CD14-positive monocyte (primary cell): ENCODE measurements at regions of chr12 and their contacts with region 1.

Region 1: GRCh38 chr12:31682136-31682962 is 22.9 kb downstream of the ETFBKMT start:
- DNase-seq: peak; percentile 76 to 88 (median 84)
- H3K4me3 ChIP-seq: no peak overlapping the region
- H3K4me3 Mint-ChIP-seq: no peak overlapping the region
- H3K27ac ChIP-seq: no peak overlapping the region
- H3K27ac Mint-ChIP-seq: peak overlapping the region in 6 of 7 donors; percentile 17 to 91 (median 80)
- H3K4me1 ChIP-seq: peaks cover 18 to 21% of the 10 kb centered on the region in 2 donors
- H3K4me1 Mint-ChIP-seq: peaks cover 18% of the 10 kb centered on the region
- H3K27me3 ChIP-seq: no peaks in the 10 kb centered on the region
- H3K27me3 Mint-ChIP-seq: peaks cover 0 to 1% (median 0%) of the 10 kb centered on the region in 3 donors
- CTCF ChIP-seq: peak; percentile 81

Region 2: DNA sequence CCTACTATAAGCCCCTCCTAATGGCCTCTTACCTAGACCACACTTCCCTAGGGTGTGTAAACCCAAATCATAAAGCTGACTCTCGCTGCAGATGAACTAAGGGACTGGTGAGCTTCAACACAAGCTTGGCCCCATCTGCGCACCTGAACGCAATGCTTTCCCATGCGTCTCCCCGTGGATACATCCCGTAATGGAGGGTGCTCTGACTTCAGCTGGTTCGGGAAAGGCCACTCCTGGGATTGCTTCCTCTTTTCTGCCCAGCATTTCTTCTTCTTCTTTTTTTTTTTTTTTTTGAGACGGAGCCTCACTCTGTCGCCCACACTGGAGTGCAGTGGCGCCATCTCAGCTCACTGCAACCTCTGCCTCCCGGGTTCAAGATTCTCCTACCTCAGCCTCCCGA is 50.6 kb before region 1 on chr12:
- intact Hi-C with region 1: no loop called
- DNase-seq: peak in 2 of 3 donors; percentile 34 to 65
- H3K4me3 ChIP-seq: no peak overlapping the region
- H3K4me3 Mint-ChIP-seq: peak overlapping the region in 1 of 2 donors; percentile 60
- H3K27ac ChIP-seq: no peak overlapping the region
- H3K27ac Mint-ChIP-seq: no peak overlapping the region
- H3K4me1 ChIP-seq: peaks cover 12% of the 10 kb centered on the region in 2 donors
- H3K4me1 Mint-ChIP-seq: peaks cover 19% of the 10 kb centered on the region
- H3K27me3 ChIP-seq: no peaks in the 10 kb centered on the region
- H3K27me3 Mint-ChIP-seq: peaks cover 0 to 6% (median 3%) of the 10 kb centered on the region in 3 donors
- CTCF ChIP-seq: no peak

Region 3: GRCh38 chr12:31705621-31706020 is 23.3 kb after region 1 on chr12:
- intact Hi-C with region 1: no loop called
- DNase-seq: no peak
- H3K4me3 ChIP-seq: no peak overlapping the region
- H3K4me3 Mint-ChIP-seq: no peak overlapping the region
- H3K27ac ChIP-seq: no peak overlapping the region
- H3K27ac Mint-ChIP-seq: peak overlapping the region in 1 of 7 donors; percentile 28
- H3K4me1 ChIP-seq: no peaks in the 10 kb centered on the region
- H3K4me1 Mint-ChIP-seq: peaks cover 4% of the 10 kb centered on the region
- H3K27me3 ChIP-seq: no peaks in the 10 kb centered on the region
- H3K27me3 Mint-ChIP-seq: peaks cover 0 to 5% (median 0%) of the 10 kb centered on the region in 3 donors
- CTCF ChIP-seq: no peak

Region 4: GRCh38 chr12:31832740-31833729 is 150.7 kb after region 1 on chr12:
- intact Hi-C with region 1: loop called in 1 of 2 experiments (anchors 5 kb)
- DNase-seq: peak; percentile 88 to 97 (median 88)
- H3K4me3 ChIP-seq: peak overlapping the region in 1 of 3 experiments; percentile 34
- H3K4me3 Mint-ChIP-seq: peak overlapping the region; percentile 45 to 60
- H3K27ac ChIP-seq: peak overlapping the region; percentile 82 to 98
- H3K27ac Mint-ChIP-seq: peak overlapping the region; percentile 94 to 99 (median 97)
- H3K4me1 ChIP-seq: peaks cover 40 to 43% of the 10 kb centered on the region in 2 donors
- H3K4me1 Mint-ChIP-seq: peaks cover 29% of the 10 kb centered on the region
- H3K27me3 ChIP-seq: no peaks in the 10 kb centered on the region
- H3K27me3 Mint-ChIP-seq: peaks cover 0 to 2% (median 0%) of the 10 kb centered on the region in 3 donors
- CTCF ChIP-seq: no peak

Region 5: DNA sequence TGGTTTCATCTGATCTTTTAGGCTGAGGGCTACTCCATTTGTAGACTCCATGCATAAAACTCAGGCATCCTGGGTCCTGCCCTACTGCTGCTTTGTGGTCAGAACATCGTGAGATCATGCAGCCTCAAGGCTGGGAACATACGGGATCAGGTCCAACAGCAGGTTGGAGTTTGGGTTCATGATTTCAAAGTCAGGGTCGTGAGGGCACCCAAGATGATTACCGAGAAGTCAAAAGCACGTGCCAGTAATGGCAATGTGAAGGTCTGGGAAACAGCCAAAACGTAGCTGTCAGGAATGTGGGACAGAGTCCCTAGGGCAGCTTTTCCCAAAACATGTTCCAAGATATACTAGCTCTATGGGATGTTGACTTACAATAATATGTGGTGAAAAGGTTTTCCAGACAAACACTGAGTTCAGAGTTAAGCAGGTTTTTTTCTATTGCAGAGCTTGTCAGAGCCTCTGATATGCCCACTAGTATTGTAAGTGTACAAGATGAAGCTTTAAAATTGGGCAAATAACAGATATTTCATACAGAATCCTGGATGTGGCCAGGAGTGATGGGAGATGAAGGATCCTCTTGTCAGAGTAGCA is 866.4 kb after region 1 on chr12:
- intact Hi-C with region 1: no loop called
- DNase-seq: no peak
- H3K4me3 ChIP-seq: no peak overlapping the region
- H3K4me3 Mint-ChIP-seq: peak overlapping the region in 1 of 2 donors; percentile 39
- H3K27ac ChIP-seq: peak overlapping the region in 1 of 2 donors; percentile 55
- H3K27ac Mint-ChIP-seq: peak overlapping the region in 4 of 7 donors; percentile 63 to 91 (median 68)
- H3K4me1 ChIP-seq: peaks cover 24 to 32% of the 10 kb centered on the region in 2 donors
- H3K4me1 Mint-ChIP-seq: peaks cover 36% of the 10 kb centered on the region
- H3K27me3 ChIP-seq: no peaks in the 10 kb centered on the region
- H3K27me3 Mint-ChIP-seq: no peaks in the 10 kb centered on the region
- CTCF ChIP-seq: no peak